OCI-LY7 (cell line): ENCODE measurements at regions of chrX and their contacts with region 1.

Region 1: GRCh38 chrX:20527558-20528011 is 260.9 kb upstream of the RPS6KA3 start:
- DNase-seq: peak; percentile 28
- H3K4me3 ChIP-seq: no peak overlapping the region
- H3K27ac ChIP-seq: no peak overlapping the region
- H3K4me1 ChIP-seq: no peaks in the 10 kb centered on the region
- CTCF ChIP-seq: peak; percentile 73

Region 2: DNA sequence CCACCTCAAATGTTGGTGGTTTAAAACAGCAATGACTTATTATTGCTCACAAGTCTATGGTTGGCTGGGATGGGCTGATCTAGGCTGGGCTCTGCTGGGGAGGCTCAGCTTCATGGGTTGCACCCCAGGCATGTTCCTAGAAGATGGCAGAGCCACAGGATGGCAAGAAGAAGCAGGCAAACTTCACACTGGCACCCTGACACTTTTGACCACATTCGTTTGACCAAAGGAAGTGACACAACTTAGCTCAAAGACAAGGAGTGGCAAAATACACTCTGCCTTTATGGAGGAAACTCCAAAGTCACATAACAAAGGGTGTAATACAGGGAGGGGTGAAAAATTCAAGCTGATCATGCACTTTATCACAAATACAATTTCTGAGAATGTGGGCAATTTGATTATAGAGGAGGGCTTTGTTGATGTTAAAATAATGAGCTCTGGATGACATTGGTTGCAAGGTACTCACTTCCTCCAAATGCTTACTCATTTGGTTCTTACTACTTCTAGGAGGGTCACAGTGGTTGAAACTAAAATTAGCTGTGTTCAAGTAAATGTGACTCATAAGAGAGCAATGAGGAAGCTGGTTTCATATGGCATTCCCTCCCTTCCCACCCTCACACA is 11.6 kb before region 1 on chrX:
- CTCF ChIA-PET with region 1: no interaction called
- POLR2A ChIA-PET with region 1: no interaction called
- intact Hi-C with region 1: no loop called
- DNase-seq: no peak
- H3K4me3 ChIP-seq: no peak overlapping the region
- H3K27ac ChIP-seq: no peak overlapping the region
- H3K4me1 ChIP-seq: no peaks in the 10 kb centered on the region
- CTCF ChIP-seq: no peak

Region 3: DNA sequence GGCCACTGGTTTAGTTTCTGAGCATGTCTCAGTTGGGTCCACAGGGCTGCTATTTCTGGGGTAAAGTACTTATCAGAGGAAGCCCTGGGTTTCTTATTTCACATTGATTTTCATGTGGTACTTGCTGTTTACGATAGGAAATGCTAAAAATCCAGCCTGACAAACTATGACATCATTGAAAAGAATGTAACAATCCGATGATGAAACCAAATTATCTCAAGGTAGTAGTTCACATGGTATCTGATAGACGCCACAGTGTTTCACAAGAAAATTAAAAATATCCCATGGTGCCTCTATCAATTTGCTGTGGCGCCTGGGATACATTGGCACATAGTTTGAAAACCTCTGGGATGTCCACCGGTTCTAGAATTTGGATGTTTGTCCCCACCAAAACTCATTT is 158.1 kb after region 1 on chrX:
- CTCF ChIA-PET with region 1: no interaction called
- POLR2A ChIA-PET with region 1: no interaction called
- intact Hi-C with region 1: no loop called
- DNase-seq: no peak
- H3K4me3 ChIP-seq: no peak overlapping the region
- H3K27ac ChIP-seq: no peak overlapping the region
- H3K4me1 ChIP-seq: no peaks in the 10 kb centered on the region
- CTCF ChIP-seq: no peak

Region 4: GRCh38 chrX:20767346-20767745 is 239.8 kb after region 1 on chrX:
- CTCF ChIA-PET with region 1: no interaction called
- POLR2A ChIA-PET with region 1: no interaction called
- intact Hi-C with region 1: no loop called
- DNase-seq: no peak
- H3K4me3 ChIP-seq: no peak overlapping the region
- H3K27ac ChIP-seq: no peak overlapping the region
- H3K4me1 ChIP-seq: no peaks in the 10 kb centered on the region
- CTCF ChIP-seq: no peak

Region 5: DNA sequence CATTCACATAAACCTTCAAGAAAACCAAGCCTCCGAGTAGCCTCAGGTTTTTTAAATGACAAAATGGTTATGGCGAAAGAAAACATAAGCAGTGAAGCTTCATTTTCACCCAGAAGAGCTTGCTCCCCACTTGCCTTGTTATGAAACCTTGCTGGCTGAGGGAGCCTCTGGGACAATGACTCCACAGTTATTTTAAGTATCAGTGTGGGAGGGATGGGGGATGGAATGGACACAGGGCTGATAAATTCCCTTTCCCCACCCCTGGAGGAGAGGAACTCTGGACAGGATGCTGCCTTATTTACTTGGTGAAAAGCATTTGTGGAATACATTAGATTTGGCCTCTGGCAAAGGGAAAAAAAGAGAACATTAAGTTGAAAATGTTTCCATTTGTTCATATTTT is 625.9 kb after region 1 on chrX:
- CTCF ChIA-PET with region 1: no interaction called
- POLR2A ChIA-PET with region 1: no interaction called
- intact Hi-C with region 1: no loop called
- DNase-seq: no peak
- H3K4me3 ChIP-seq: no peak overlapping the region
- H3K27ac ChIP-seq: no peak overlapping the region
- H3K4me1 ChIP-seq: no peaks in the 10 kb centered on the region
- CTCF ChIP-seq: no peak

Region 6: DNA sequence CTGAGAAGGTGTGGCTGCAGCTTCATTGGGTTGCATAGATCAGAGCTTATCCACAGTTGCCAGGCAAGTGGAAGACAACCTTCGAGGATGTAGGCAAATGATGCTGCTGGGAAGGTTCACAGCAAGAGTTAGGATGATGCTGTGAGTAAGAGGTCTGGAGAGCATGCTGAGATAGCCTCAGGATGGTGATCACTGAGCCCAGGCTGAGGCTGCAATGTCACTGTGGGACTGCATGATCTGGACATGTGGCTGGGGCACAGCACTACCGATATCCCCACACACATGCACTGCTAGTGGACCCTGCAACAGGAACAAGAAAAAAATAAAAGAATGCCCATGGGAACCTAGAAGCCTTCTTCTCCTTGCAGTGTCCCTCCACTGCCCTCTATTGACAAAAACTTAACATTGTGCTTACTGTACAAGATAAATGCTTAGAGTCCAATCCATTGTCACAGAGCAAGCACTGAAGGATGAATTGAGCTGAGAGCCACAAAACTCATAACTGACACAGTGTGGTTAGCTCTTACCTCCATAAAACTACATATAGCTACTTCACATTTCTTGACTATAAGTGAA is 952.2 kb after region 1 on chrX:
- CTCF ChIA-PET with region 1: no interaction called
- POLR2A ChIA-PET with region 1: no interaction called
- intact Hi-C with region 1: loop called (anchors 2 kb)
- DNase-seq: peak; percentile 47
- H3K4me3 ChIP-seq: no peak overlapping the region
- H3K27ac ChIP-seq: no peak overlapping the region
- H3K4me1 ChIP-seq: no peaks in the 10 kb centered on the region
- CTCF ChIP-seq: peak; percentile 69

Region 7: GRCh38 chrX:21745756-21746155 is 1218.2 kb after region 1 on chrX:
- CTCF ChIA-PET with region 1: no interaction called
- POLR2A ChIA-PET with region 1: no interaction called
- intact Hi-C with region 1: loop called (anchors 5 kb)
- DNase-seq: peak; percentile 19
- H3K4me3 ChIP-seq: no peak overlapping the region
- H3K27ac ChIP-seq: no peak overlapping the region
- H3K4me1 ChIP-seq: no peaks in the 10 kb centered on the region
- CTCF ChIP-seq: peak; percentile 78